Calu3 (cell line): ENCODE measurements at regions of chr1 and their contacts with region 1.

Region 1: GRCh38 chr1:200837931-200838571 is 34.7 kb upstream of the GPR25 start:
- DNase-seq: no peak
- H3K4me3 Mint-ChIP-seq: no peak overlapping the region
- H3K27ac Mint-ChIP-seq: no peak overlapping the region
- H3K4me1 Mint-ChIP-seq: no peaks in the 10 kb centered on the region
- H3K27me3 Mint-ChIP-seq: no peaks in the 10 kb centered on the region
- CTCF ChIP-seq: peak; percentile 27

Region 2: GRCh38 chr1:200558866-200559459 is 279.1 kb before region 1 on chr1:
- CTCF ChIA-PET with region 1: no interaction called
- intact Hi-C with region 1: loop called (anchors 5 kb)
- DNase-seq: peak; percentile 43
- H3K4me3 Mint-ChIP-seq: no peak overlapping the region
- H3K27ac Mint-ChIP-seq: no peak overlapping the region
- H3K4me1 Mint-ChIP-seq: peaks cover 20% of the 10 kb centered on the region
- H3K27me3 Mint-ChIP-seq: no peaks in the 10 kb centered on the region
- CTCF ChIP-seq: no peak